Common myeloid progenitor, CD34-positive (primary cell): ENCODE measurements at regions of chr16 and their contacts with region 1.

Region 1: GRCh38 chr16:8655184-8655717 is 19.2 kb upstream of the ABAT start:
- DNase-seq: peak in 2 of 3 donors; percentile 40 to 41
- H3K4me3 ChIP-seq: no peak overlapping the region
- H3K27ac ChIP-seq: no peak overlapping the region
- H3K4me1 ChIP-seq: peaks cover 0 to 4% (median 1%) of the 10 kb centered on the region in 4 experiments
- H3K27me3 ChIP-seq: no peaks in the 10 kb centered on the region

Region 2: DNA sequence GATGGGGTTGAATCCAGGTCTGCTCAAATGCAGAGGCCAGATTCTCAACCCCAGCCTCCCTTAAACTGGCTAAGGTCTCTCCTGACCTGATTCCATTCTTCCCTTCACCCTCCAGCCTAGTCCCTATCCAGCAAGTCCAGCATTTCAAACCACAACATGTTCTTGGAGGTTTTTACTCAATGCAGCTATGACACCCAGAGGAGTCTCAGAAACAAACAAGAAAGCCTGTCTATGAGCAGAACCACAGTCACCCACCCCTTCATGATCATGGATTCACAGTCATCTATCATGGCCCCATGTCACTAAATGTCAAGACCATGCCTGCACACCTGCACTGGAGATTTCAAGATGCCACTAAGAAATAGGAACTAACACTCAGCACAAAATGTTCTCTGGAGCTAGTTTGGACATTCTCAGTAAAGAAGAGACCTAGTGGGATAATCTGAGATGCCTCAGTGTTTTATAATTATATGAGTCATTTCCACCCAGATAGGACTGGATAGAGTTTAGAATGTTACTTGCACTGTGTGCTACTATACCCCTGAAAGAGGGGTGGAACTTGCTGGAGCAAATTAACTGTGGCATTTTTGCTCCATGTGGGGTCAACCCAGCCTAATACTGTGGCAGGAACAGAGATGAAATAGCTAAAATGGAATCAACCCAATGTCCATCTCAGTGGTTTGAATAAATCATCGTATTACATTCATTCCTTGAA is 43.2 kb before region 1 on chr16:
- CTCF ChIA-PET with region 1: no interaction called
- POLR2A ChIA-PET with region 1: no interaction called
- DNase-seq: no peak
- H3K4me3 ChIP-seq: no peak overlapping the region
- H3K27ac ChIP-seq: no peak overlapping the region
- H3K4me1 ChIP-seq: no peaks in the 10 kb centered on the region
- H3K27me3 ChIP-seq: peaks cover 0 to 14% (median 4%) of the 10 kb centered on the region in 5 experiments

Region 3: GRCh38 chr16:8644211-8645140 is 10.8 kb before region 1 on chr16:
- CTCF ChIA-PET with region 1: interaction called, 18 read pairs
- POLR2A ChIA-PET with region 1: no interaction called
- DNase-seq: peak; percentile 64 to 89 (median 82)
- H3K4me3 ChIP-seq: peak overlapping the region in 2 of 7 experiments; percentile 4 to 33
- H3K27ac ChIP-seq: peak overlapping the region in 1 of 2 experiments; percentile 38
- H3K4me1 ChIP-seq: peaks cover 0 to 28% (median 13%) of the 10 kb centered on the region in 4 experiments
- H3K27me3 ChIP-seq: no peaks in the 10 kb centered on the region

Region 4: DNA sequence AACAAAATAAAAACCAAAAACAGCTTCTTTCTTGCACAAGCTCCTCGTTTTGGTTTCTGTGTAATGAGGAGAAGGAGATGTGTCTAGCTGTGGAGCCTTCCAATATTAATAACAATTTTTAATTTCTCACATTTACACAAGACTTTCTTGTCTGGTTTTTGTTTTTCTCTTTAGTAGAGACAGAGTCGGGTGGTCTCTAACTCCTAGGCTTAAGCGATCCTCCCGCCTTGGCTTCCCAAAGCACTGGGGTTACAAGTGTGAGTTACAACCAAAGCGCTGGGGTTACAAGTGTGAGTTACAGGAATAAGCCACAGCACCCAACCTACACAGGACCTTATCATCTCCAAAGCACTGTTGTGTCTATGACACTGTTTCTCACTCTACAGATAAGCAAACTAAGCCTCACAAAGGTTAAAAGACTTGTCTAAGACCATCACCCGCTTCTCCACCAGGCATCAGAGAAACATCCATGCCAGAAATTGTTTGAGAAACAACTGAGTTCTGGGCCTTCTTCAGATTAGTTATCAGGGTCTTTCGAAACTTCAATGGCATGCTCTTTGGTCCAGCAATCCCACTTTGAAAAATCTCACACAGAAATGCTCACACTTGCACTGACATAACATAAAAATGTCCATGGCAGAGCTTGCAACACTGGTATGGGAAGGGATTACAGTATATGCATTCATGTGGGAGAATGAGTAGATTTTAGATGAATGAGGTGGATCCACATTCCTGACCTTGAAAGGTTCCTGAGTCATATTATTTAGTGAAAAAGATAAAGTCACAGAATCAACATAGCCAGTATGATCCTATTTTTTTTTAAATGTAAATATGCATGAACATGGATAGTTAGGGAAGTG is 23.0 kb after region 1 on chr16:
- CTCF ChIA-PET with region 1: no interaction called
- POLR2A ChIA-PET with region 1: no interaction called
- DNase-seq: no peak
- H3K4me3 ChIP-seq: no peak overlapping the region
- H3K27ac ChIP-seq: no peak overlapping the region
- H3K4me1 ChIP-seq: peaks cover 0 to 13% (median 10%) of the 10 kb centered on the region in 4 experiments
- H3K27me3 ChIP-seq: peaks cover 0 to 3% (median 0%) of the 10 kb centered on the region in 5 experiments

Region 5: DNA sequence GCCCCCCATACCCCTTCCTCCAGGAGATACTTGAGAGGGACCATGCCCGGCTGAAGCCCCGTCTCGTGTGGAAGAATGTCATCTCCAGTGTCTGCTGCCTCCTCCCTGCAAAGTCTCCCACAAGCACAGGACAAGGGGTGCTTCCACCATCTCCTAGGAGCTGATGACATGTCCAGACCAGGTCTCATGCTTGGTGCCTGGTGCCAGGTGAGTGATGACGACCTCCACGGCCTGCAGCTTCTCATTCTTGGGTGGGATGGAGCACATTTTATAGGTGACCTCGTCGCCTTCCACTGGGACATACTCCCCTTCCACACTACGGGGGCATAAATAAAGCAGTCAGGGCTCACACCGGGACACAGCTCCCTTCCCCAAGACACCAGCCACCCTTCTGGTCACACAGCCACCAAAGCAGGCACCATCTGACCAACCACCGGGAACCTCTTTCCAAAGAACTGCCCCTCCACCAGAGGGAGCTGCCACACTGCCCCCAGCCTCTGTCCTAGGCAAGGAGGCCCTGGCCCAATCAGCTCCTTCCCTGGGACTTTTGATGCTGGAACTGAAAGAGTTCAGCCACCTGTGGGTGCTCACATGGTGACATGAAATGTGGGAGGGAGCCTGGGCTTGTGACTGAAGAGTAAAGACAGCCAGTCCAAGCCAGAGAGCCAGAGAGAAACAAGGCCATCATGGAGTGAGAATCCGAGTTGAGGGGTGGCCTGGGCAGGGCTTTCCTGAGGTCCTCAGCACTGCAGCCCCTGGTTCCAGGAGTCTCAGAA is 199.9 kb after region 1 on chr16:
- CTCF ChIA-PET with region 1: no interaction called
- POLR2A ChIA-PET with region 1: no interaction called
- DNase-seq: no peak
- H3K4me3 ChIP-seq: no peak overlapping the region
- H3K27ac ChIP-seq: no peak overlapping the region
- H3K4me1 ChIP-seq: peaks cover 2 to 16% (median 14%) of the 10 kb centered on the region in 4 experiments
- H3K27me3 ChIP-seq: no peaks in the 10 kb centered on the region